ENCODE measurements at regions of chr1 and their contacts with region 1.

Region 1: GRCh38 chr1:175373786-175374623 is 181.4 kb upstream of the KIAA0040 start:
- DNase-seq: peak; percentile 38
- H3K4me3 ChIP-seq: no peak overlapping the region
- H3K27ac ChIP-seq: no peak overlapping the region
- H3K4me1 ChIP-seq: no peaks in the 10 kb centered on the region
- H3K27me3 ChIP-seq: peaks cover 0 to 3% of the 10 kb centered on the region in 2 experiments
- CTCF ChIP-seq: peak; percentile 73 to 82
- POLR2A ChIP-seq: no peak

Region 2: DNA sequence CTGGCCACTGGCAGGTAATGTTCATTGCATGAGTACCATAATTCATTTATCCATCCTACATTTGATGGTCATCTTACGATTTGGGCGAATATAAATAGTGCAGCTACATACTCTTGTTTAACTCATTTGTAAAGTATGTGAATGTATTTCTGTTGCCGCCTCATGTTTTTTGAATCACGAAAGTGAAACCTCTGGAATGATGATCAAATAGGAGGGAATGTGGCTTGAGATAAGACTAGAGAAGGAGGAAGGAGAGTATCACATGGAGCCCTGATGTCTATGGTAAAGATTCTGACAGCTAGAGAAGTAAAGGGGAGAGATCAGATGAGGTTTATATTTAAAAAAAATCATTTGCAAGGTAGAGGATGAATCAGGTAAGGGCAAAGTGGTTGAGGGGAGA is 358.8 kb before region 1 on chr1:
- CTCF ChIA-PET with region 1: no interaction called
- POLR2A ChIA-PET with region 1: no interaction called
- dilution Hi-C with region 1: no loop called
- intact Hi-C with region 1: no loop called
- DNase-seq: no peak
- H3K4me3 ChIP-seq: no peak overlapping the region
- H3K27ac ChIP-seq: no peak overlapping the region
- H3K4me1 ChIP-seq: no peaks in the 10 kb centered on the region
- H3K27me3 ChIP-seq: no peaks in the 10 kb centered on the region
- CTCF ChIP-seq: no peak
- POLR2A ChIP-seq: no peak

Region 3: GRCh38 chr1:175757381-175758015 is 383.5 kb after region 1 on chr1:
- CTCF ChIA-PET with region 1: interaction called, 15 read pairs
- POLR2A ChIA-PET with region 1: no interaction called
- dilution Hi-C with region 1: no loop called
- intact Hi-C with region 1: loop called (anchors 1 kb)
- DNase-seq: peak; percentile 35
- H3K4me3 ChIP-seq: no peak overlapping the region
- H3K27ac ChIP-seq: no peak overlapping the region
- H3K4me1 ChIP-seq: no peaks in the 10 kb centered on the region
- H3K27me3 ChIP-seq: peaks cover 0 to 7% of the 10 kb centered on the region in 2 experiments
- CTCF ChIP-seq: peak; percentile 95
- POLR2A ChIP-seq: no peak

Region 4: GRCh38 chr1:175887981-175888433 is 514.0 kb after region 1 on chr1:
- CTCF ChIA-PET with region 1: interaction called, 6 read pairs
- POLR2A ChIA-PET with region 1: no interaction called
- dilution Hi-C with region 1: no loop called
- intact Hi-C with region 1: loop called (anchors 1 kb)
- DNase-seq: peak; percentile 44
- H3K4me3 ChIP-seq: no peak overlapping the region
- H3K27ac ChIP-seq: no peak overlapping the region
- H3K4me1 ChIP-seq: no peaks in the 10 kb centered on the region
- H3K27me3 ChIP-seq: peaks cover 0 to 2% of the 10 kb centered on the region in 2 experiments
- CTCF ChIP-seq: peak; percentile 81 to 96
- POLR2A ChIP-seq: no peak

Region 5: DNA sequence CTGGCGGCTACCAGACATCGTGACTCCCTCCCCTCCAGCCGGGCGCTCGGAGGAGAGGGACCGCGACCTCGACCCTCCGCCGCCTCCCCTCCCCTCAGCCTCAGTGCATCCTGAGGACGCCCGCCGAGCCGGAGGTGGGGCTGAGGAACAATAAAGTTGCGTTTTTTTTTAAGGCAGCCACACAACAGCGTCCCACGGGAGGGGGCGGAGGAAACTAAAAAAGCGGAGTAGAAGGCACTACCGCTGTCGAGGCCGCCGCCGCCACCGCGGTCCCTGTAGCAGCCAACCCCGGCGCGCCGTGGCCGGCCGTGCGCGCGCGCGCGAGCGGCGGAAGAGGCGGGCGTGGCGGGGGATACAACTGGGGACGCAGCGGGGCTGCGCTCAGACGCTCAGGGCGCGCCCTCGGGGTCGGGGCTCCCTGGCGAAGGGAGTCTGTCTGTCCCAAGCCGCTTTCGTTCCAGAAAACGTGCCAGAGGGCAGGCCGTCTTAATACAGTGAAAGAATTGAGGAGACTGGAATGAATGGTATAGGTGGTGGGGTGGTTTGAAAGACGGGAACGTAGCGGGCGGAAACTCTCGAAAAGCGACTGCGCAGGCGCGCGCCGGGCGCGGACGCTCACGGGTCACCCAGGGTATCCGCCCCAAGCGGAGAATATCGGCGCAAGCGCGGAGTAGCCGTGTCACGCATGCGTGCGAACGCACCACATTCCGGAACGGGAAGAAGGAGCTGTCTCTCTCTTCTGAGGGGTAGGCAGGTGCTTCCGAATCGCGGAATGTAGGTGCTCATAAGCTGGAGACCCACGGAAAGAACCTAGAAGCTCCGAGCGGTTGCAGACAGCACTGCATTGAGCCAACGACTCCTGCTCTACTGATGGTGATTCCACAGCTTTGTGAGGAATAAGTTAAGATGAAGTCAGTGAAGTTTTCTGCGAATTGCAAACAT is 833.2 kb after region 1 on chr1 and contains the start of gene COP1:
- CTCF ChIA-PET with region 1: no interaction called
- POLR2A ChIA-PET with region 1: no interaction called
- dilution Hi-C with region 1: no loop called
- intact Hi-C with region 1: loop called (anchors 10 kb)
- DNase-seq: peak; percentile 95
- H3K4me3 ChIP-seq: peak within 1 kb of the TSS; percentile 77 to 92 (median 87)
- H3K27ac ChIP-seq: peak within 1 kb of the TSS; percentile 80
- H3K4me1 ChIP-seq: peaks cover 15% of the 10 kb centered on the region
- H3K27me3 ChIP-seq: no peaks in the 10 kb centered on the region
- CTCF ChIP-seq: no peak
- POLR2A ChIP-seq: peak; percentile 86
- total RNA-seq, gene COP1: 40.8 and 40.9 TPM in 2 replicates

Region 6: GRCh38 chr1:176225911-176226310 is 851.9 kb after region 1 on chr1:
- CTCF ChIA-PET with region 1: no interaction called
- POLR2A ChIA-PET with region 1: no interaction called
- dilution Hi-C with region 1: no loop called
- intact Hi-C with region 1: no loop called
- DNase-seq: no peak
- H3K4me3 ChIP-seq: no peak overlapping the region
- H3K27ac ChIP-seq: no peak overlapping the region
- H3K4me1 ChIP-seq: no peaks in the 10 kb centered on the region
- H3K27me3 ChIP-seq: no peaks in the 10 kb centered on the region
- CTCF ChIP-seq: no peak
- POLR2A ChIP-seq: no peak

Region 7: DNA sequence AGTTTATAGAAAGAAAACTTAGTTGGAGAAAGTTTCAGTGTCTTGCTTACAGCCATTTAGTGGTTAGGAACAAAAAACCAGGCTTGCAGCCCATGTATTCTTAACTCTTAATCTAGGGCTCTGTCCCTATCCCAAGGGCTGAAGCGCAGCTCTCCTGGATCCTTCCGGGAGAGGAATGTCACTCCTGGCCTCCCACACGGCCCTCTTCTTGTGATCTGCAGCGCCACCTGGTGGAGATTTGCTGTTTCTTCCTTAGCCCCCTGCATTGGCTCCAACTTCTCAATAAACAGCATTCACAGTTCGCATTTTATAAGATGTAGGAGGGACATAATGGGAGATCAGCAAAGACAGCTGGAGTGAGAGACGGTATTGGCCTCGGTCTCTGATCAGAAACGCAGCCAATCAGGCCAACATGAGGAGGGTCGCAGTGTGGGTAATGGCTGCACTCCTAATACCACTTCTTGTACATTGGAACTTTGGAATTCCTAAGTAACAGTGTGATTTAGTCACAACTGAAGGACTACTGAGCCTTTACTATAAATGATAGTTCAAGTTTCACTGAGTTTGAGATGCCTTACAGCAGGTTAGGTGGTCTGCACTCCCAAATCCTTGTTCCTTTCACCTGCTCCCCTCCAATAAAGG is 1507.1 kb after region 1 on chr1:
- CTCF ChIA-PET with region 1: interaction called, 21 read pairs
- POLR2A ChIA-PET with region 1: no interaction called
- dilution Hi-C with region 1: no loop called
- intact Hi-C with region 1: loop called (anchors 1 kb)
- DNase-seq: peak; percentile 46
- H3K4me3 ChIP-seq: no peak overlapping the region
- H3K27ac ChIP-seq: no peak overlapping the region
- H3K4me1 ChIP-seq: no peaks in the 10 kb centered on the region
- H3K27me3 ChIP-seq: no peaks in the 10 kb centered on the region
- CTCF ChIP-seq: peak; percentile 79
- POLR2A ChIP-seq: no peak

Measured in endothelial cell of umbilical vein (primary cell).